A549 (cell line): ENCODE measurements at regions of chr2 and their contacts with region 1.

Region 1: DNA sequence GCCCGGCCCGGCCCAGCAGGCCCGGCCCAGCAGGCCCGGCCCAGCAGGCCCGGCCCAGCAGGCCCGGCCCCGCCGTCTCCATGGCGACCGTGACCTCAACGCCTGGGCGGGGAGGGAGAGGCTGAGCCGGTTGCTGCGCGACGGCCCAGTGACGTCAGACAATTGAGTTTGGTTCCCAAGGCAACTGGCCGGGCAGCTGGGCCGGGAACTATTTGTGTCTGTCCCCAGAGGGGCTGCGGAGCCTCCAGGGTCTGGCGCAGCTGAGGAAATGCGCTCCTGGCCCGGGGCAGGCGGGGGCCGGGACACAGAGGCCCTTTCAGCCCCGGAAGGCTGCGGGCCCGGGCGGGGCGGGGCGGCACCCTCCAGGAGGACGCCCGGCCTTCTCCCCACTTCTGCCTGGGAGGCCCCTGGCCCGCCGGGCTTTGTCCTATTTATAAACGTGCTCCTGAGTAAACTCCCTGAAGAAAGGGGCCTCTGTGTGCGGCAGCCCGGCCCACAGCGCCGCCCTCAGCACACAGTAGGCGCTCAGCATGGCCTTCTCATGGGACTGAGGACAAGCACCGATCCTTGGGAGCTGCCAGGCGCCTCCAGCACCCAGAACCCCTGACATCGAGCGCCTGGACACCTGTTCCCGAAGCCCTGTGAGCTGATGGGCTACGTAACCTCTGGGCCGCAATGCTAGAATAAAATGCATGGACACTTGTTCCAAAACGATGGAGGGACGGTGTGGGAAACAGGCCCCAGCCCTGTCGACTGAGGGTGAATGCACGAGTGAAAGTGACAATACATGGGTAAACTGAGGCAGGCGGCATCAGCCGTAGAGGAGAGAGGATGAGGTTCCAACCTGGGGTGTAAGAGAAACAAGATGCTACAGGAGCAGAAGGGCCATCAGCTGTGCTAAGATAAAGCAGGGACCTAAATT is 12.3 kb downstream of the TEX44 start:
- DNase-seq: peak; percentile 93 to 98
- ATAC-seq: peak; percentile 86 to 87
- H3K4me3 ChIP-seq: peak overlapping the region; percentile 47
- H3K27ac ChIP-seq: peak overlapping the region; percentile 96 to 97
- H3K4me1 ChIP-seq: peaks cover 34% of the 10 kb centered on the region
- CTCF ChIP-seq: no peak; the same call in 2 of the 3 replicates
- EP300 ChIP-seq: no peak
- POLR2A ChIP-seq: no peak; the same call in 1 of the 2 replicates
- RAD21 ChIP-seq: no peak

Region 2: DNA sequence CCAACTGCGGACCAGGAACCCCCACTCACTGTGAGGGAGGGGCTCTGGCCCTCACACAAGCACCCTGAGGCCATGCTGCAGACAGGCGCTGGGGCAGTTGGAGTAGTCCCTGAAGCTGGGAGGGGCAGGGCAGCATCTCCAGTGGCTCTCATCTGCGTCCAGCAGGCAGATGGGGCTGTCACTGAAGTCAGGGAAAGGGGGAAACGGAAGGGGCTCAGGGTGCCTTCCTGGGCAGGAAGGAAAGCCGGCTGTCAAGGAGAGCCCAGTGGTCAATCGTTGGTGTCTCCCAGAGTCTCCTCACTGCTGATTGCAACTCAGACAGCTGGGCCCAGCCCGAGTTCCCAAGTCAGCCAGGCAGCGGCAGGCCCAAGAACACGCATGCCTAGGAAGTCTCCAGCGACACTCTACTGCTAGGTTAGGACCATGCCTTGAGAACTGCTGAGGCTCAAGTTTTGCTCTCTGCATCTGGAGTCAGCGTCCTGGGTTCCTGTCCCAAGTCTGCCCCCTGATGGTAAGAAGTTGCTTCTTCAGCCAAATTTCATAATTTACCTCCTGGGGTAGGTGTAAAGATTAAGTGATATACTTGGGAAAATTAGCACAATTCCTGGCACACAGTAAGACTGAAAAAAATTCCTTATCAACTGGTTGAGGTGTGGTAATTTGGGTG is 47.2 kb before region 1 on chr2:
- CTCF ChIA-PET with region 1: interaction called, 208 read pairs
- POLR2A ChIA-PET with region 1: no interaction called
- DNase-seq: peak; percentile 72 to 83
- ATAC-seq: peak; percentile 86 to 92
- H3K4me3 ChIP-seq: no peak overlapping the region
- H3K27ac ChIP-seq: no peak overlapping the region
- H3K4me1 ChIP-seq: no peaks in the 10 kb centered on the region
- CTCF ChIP-seq: peak; percentile 76
- EP300 ChIP-seq: no peak
- POLR2A ChIP-seq: no peak
- RAD21 ChIP-seq: peak; percentile 78 to 87

Region 3: DNA sequence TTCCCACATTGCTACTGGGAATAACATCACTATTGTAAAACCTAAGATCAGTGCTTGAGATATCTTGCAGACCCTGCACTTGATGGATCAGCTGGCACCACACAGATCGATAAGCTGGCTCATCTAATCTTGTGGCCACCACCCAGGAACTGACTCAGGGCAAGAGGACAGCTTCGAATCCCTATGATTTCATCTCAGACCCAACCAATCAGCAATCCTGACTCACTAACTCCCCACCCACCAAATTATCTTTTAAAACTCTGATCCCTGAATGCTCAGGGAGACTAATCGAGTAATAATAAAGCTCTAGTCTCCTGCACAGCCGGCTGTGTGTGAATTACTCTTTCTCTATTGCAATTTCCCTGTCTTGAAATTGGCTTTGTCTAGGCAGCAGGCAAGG is 23.6 kb before region 1 on chr2:
- CTCF ChIA-PET with region 1: interaction called, 18 read pairs
- POLR2A ChIA-PET with region 1: no interaction called
- DNase-seq: no peak
- ATAC-seq: no peak
- H3K4me3 ChIP-seq: no peak overlapping the region
- H3K27ac ChIP-seq: no peak overlapping the region
- H3K4me1 ChIP-seq: no peaks in the 10 kb centered on the region
- CTCF ChIP-seq: no peak
- EP300 ChIP-seq: no peak
- POLR2A ChIP-seq: no peak
- RAD21 ChIP-seq: no peak

Region 4: DNA sequence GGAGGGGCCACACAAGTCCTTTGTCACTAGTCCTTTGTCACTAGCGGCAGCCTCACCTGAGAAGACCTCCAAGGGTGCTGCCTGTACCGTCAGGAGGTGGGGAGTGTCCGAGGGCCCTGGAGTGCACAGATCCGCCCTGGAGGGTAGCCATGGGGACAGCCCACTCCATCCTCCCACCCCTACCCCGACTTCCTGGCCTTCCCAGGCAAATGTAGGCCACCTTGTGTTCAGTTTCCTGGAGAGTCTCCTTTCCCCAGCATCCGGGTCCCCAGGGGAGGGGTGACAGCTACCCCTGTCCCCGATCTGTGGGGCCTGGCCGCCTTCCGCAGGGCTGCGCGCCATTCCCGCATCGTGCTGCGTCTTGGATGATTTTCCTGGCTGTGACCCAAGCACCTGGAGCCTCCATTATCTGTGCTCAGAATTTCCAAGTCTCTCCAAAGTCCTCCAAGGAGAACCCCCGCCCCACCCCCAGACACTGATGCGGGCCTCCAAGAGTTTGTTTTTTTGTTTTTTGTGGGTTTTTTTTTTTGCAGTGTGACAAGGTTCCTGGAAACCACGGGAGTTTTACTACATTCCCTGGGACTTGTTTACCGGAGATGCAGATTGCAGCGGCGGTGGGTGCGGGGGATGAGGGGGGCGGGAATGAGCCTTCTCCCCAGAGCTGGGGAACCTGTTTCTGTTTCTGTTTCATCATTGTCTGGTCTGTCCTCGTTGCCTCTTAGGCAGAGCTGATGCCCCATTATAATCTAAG is 16.4 kb after region 1 on chr2:
- CTCF ChIA-PET with region 1: interaction called, 12 read pairs
- POLR2A ChIA-PET with region 1: no interaction called
- DNase-seq: no peak
- ATAC-seq: peak; percentile 21 to 29; a peak in 4 of 6 replicates
- H3K4me3 ChIP-seq: no peak overlapping the region
- H3K27ac ChIP-seq: peak overlapping the region in 1 of 2 experiments; percentile 62; a peak in 3 of 6 replicates
- H3K4me1 ChIP-seq: peaks cover 10% of the 10 kb centered on the region
- CTCF ChIP-seq: no peak
- EP300 ChIP-seq: no peak
- POLR2A ChIP-seq: no peak
- RAD21 ChIP-seq: no peak

Region 5: GRCh38 chr2:231662028-231662810 is 57.3 kb after region 1 on chr2:
- CTCF ChIA-PET with region 1: interaction called, 4,158 read pairs
- POLR2A ChIA-PET with region 1: interaction called, 16 read pairs
- DNase-seq: peak; percentile 69 to 99
- ATAC-seq: peak; percentile 48 to 72
- H3K4me3 ChIP-seq: peak overlapping the region; percentile 40
- H3K27ac ChIP-seq: peak overlapping the region; percentile 88 to 100
- H3K4me1 ChIP-seq: peaks cover 20% of the 10 kb centered on the region
- CTCF ChIP-seq: no peak; the same call in 2 of the 3 replicates
- EP300 ChIP-seq: no peak
- POLR2A ChIP-seq: peak; percentile 51
- RAD21 ChIP-seq: 0 out of 5 replicates have a peak, but pooled peaks of 1 of the 2 experiments have one; percentile 34

Region 6: GRCh38 chr2:231713730-231714430 is 108.9 kb after region 1 on chr2:
- CTCF ChIA-PET with region 1: interaction called, 4,158 read pairs
- POLR2A ChIA-PET with region 1: interaction called, 3 read pairs
- DNase-seq: peak; percentile 88 to 93
- ATAC-seq: peak; percentile 44 to 60
- H3K4me3 ChIP-seq: no peak overlapping the region
- H3K27ac ChIP-seq: peak overlapping the region in 1 of 2 experiments; percentile 73; a peak in 3 of 6 replicates
- H3K4me1 ChIP-seq: peaks cover 55% of the 10 kb centered on the region
- CTCF ChIP-seq: peak; percentile 89
- EP300 ChIP-seq: no peak
- POLR2A ChIP-seq: no peak
- RAD21 ChIP-seq: peak; percentile 50 to 60